Left ventricle myocardium superior (tissue), 1 donor: ENCODE measurements at regions of chr5 and their contacts with region 1.

Region 1: DNA sequence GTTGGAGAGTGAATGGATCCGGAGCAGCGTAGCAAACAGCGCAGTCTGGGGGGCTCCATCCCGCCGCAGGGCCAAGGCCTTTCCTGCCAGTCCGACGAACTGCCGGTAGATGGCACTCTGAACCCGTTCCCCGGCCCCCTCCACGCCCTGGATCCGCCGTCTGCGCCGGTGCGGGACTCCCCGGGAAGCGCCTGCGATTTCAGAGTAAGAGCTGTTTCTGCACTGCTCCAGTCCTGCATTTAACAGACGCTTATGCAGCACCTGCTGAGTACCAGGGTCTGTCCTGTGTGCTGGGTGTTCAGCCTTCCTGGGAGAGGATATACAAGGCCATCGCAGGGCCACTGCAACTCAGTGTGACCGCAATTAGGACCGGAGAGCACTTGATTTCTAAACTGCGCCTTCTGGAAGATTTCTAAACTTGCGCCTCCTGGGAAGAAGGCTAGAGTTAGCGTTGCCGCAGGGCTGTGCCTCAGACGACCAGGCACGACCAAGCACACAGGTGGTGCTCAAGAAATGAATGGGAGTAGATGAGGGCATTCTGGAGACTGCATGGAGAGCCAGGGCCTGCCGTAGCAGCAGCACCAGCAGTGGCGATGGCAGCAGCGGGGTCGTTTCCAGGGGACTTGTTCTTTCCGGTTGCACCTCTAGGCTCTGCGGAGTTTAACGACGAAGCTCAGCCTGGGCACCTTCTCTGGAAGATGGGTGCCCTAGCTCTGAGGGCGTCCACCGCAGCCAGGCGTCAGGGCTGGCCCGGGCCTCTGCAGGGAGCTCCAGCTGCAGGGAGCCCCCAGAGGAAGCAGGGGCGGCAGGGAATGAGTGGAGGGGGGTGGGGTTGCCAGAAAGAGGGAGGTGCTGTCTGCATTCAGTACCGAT is 14.3 kb upstream of the TIFAB start:
- DNase-seq: peak; percentile 83
- ATAC-seq: peak; percentile 96

Region 2: GRCh38 chr5:135072387-135073281 is 393.8 kb before region 1 on chr5:
- intact Hi-C with region 1: no loop called
- DNase-seq: no peak
- ATAC-seq: no peak

Region 3: GRCh38 chr5:135551593-135552447 is 85.4 kb after region 1 on chr5:
- intact Hi-C with region 1: loop called (anchors 5 kb)
- DNase-seq: peak; percentile 60
- ATAC-seq: peak; percentile 83

Region 4: DNA sequence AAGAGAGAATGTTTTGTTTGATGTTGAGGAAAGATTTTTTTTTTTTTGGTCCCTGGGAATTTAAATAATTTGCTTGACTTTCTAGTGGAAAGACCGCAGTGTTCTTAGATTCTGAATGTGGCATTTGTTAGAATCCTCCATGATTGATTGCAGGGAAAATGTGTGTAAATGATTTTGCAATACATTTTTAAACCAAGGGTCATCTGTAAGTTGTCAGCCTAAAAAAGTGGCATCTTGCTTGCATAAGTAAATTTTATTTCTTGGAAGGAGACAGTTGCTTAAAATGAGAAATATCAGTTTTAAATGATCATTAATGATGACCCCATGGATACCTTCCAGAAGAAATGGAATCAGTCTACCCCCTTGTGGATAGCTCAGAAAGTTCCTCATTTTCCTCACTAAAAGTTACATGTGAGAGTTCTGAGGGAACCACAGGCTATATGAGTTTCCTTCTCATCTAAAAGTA is 262.9 kb after region 1 on chr5:
- intact Hi-C with region 1: no loop called
- DNase-seq: no peak
- ATAC-seq: no peak